Motor neuron (in vitro differentiated cells): ENCODE measurements at regions of chr19 and their contacts with region 1.

Region 1: DNA sequence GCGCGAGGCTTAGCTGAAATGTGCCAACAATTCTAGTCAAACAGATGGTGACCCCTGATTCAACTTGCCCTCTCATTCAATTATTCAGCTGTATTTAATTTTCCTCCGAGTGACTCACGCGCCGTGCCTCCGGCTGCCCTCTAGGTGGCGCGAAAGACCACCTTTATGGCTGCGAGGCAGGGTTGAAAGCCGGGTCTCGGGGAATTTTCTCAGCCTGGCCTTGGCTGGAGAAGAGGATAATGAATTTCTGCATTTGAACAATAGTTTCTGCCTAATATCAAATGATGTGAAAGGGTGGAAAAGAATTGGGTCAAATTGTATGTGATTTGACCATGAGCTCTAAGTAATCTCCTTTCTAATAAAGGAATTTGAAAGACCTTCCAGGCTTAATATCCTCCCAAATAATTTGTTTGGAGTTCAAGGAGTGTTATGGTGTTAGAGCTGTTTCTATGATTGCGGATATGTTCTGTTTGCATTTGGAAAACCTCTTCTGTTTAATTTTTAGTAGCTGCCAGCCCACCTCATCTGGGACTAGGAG is 310.9 kb downstream of the ZNF536 start:
- ATAC-seq: peak; percentile 65 to 90 (median 80)
- H3K4me3 ChIP-seq: no peak overlapping the region
- H3K27ac ChIP-seq: peak overlapping the region; percentile 31 to 63
- H3K4me1 ChIP-seq: peaks cover 60 to 67% of the 10 kb centered on the region in 2 donors

Region 2: GRCh38 chr19:30535011-30535410 is 148.1 kb before region 1 on chr19:
- in situ Hi-C with region 1: no loop called
- ATAC-seq: no peak
- H3K4me3 ChIP-seq: no peak overlapping the region
- H3K27ac ChIP-seq: no peak overlapping the region
- H3K4me1 ChIP-seq: peaks cover 0 to 5% of the 10 kb centered on the region in 2 donors

Region 3: GRCh38 chr19:31312009-31312676 is 629.1 kb after region 1 on chr19:
- in situ Hi-C with region 1: loop called in 1 of 9 experiments (anchors 25 kb)
- ATAC-seq: peak in 2 of 8 experiments; percentile 63 to 65
- H3K4me3 ChIP-seq: no peak overlapping the region
- H3K27ac ChIP-seq: no peak overlapping the region
- H3K4me1 ChIP-seq: peaks cover 29 to 56% of the 10 kb centered on the region in 2 donors

Region 4: GRCh38 chr19:31349160-31349881 is 666.3 kb after region 1 on chr19 and contains the start of gene TSHZ3:
- in situ Hi-C with region 1: loop called in 1 of 9 experiments (anchors 25 kb)
- ATAC-seq: peak; percentile 18 to 66 (median 57)
- H3K4me3 ChIP-seq: peak within 1 kb of the TSS; percentile 73 to 100 (median 84)
- H3K27ac ChIP-seq: peak within 1 kb of the TSS; percentile 85 to 92
- H3K4me1 ChIP-seq: peaks cover 42 to 45% of the 10 kb centered on the region in 2 donors
- total RNA-seq, gene TSHZ3: 2.2 to 22.2 (median 14.0) TPM

Region 5: GRCh38 chr19:32041681-32042292 is 1358.7 kb after region 1 on chr19:
- in situ Hi-C with region 1: loop called in 1 of 9 experiments (anchors 25 kb)
- ATAC-seq: peak in 6 of 8 experiments; percentile 34 to 69 (median 60)
- H3K4me3 ChIP-seq: peak overlapping the region; percentile 23 to 46 (median 28)
- H3K27ac ChIP-seq: no peak overlapping the region
- H3K4me1 ChIP-seq: peaks cover 39 to 50% of the 10 kb centered on the region in 2 donors

Region 6: GRCh38 chr19:32189956-32190706 is 1507.1 kb after region 1 on chr19:
- in situ Hi-C with region 1: no loop called
- ATAC-seq: no peak
- H3K4me3 ChIP-seq: no peak overlapping the region
- H3K27ac ChIP-seq: no peak overlapping the region
- H3K4me1 ChIP-seq: no peaks in the 10 kb centered on the region

Region 7: DNA sequence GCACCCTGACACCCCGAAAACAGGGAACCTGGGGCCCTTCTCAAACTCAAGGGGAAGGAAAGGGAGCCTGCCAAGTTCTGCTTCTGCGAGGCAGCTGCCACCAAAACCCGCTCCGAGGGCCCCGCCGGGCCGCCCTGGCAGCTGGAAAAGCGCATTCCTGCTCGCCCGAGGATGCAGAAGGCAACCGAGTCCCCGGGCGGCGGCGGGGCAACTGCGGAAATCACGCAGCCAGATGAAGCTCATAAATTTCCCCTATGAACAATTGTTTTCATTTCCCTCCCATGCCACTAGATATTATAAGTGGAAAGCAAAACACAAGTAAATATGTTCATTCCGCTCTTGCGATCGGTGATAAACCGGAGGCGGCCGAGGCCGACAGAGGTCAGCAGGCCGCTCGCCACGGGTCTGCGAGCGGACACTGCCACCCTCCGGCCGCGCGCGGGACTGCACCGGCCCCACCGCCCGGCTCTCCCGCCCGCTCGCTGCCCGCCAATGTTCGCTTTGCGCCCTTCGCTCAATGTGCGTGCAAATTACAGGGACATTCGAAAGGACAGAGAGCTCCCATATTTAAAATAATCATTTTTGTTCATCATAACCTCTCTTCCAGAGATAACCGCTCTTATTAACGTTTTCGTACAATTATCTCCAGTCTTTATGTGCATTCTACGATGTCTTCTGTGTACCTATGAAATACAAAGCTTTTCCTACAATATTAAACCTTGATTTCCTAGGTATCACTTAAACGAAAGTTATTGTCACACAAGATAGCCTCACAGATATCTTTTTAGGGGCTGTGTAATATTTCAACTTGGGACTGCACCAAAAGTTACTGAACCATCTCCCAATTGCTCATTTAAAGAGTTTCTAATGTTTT is 1541.5 kb after region 1 on chr19:
- in situ Hi-C with region 1: loop called in 6 of 9 experiments (anchors 10 to 25 kb)
- ATAC-seq: peak; percentile 84 to 92 (median 92)
- H3K4me3 ChIP-seq: no peak overlapping the region
- H3K27ac ChIP-seq: no peak overlapping the region
- H3K4me1 ChIP-seq: peaks cover 12 to 13% of the 10 kb centered on the region in 2 donors

Region 8: GRCh38 chr19:32345261-32346207 is 1662.5 kb after region 1 on chr19 and contains the start of gene ZNF507:
- in situ Hi-C with region 1: loop called in 1 of 9 experiments (anchors 25 kb)
- ATAC-seq: peak; percentile 81 to 91 (median 86)
- H3K4me3 ChIP-seq: peak within 1 kb of the TSS; percentile 67 to 93 (median 72)
- H3K27ac ChIP-seq: peak within 1 kb of the TSS; percentile 72 to 91
- H3K4me1 ChIP-seq: peaks cover 7 to 27% of the 10 kb centered on the region in 2 donors
- total RNA-seq, gene ZNF507: 7.9 to 31.6 (median 13.0) TPM

Region 9: GRCh38 chr19:32570081-32570785 is 1887.2 kb after region 1 on chr19:
- in situ Hi-C with region 1: loop called in 1 of 9 experiments (anchors 25 kb)
- ATAC-seq: peak; percentile 72 to 95 (median 84)
- H3K4me3 ChIP-seq: no peak overlapping the region
- H3K27ac ChIP-seq: no peak overlapping the region
- H3K4me1 ChIP-seq: no peaks in the 10 kb centered on the region